ENCODE measurements at regions of chr6 and their contacts with region 1.

Region 1: DNA sequence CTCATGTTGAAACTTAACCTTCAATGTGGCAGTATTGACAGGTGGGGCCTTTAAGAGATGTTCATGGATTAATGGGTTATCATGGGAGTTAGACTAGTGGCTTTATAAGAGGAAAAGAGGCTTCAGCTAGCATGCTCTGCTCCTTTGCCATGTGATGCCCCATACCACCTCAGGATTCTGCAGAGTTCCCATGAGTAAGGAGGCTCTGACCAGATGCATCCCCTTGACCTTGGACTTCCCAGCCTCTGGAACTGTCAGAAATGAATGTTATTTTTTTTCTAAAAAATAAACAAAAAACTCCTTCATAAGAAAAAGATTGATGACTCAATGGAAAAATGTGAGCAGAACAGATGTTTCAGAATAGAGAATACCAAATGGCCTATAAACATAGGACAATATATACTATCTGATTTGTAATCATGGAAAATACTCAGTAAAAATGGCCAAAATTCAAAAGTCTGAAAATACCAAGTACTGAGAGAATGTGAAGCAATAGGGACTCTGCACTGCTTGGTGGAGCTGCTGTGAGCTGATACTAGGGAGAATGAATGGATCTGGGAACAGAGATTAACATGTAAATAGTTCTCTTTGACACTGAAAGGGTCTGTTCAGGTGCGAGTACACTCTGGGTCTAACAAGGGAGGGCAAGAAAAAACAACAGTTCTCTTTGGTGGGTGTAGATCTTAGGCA is 7.4 kb upstream of the TRIM39 start:
- DNase-seq: no peak
- H3K4me3 ChIP-seq: no peak overlapping the region
- H3K27ac ChIP-seq: no peak overlapping the region
- H3K4me1 ChIP-seq: peaks cover 1% of the 10 kb centered on the region
- H3K27me3 ChIP-seq: no peaks in the 10 kb centered on the region
- CTCF ChIP-seq: no peak

Region 2: DNA sequence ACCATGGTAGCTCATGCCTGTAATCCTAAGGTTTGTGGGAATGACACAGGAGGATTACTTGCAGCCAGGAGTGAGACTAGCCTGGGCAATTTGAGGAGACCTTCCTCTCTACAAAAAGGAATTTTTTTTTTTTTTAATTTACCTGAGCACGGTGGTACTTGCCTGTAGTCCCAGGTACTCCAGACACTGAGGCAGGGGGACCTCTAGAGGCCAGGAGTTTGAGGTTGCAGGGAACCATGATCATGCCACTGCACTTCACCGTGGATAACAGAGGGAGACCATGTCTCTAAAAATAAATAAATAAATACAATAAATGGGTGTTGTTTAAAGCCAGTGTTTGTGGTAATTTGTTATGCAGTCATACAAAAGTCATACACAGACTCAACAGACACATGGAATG is 598.4 kb before region 1 on chr6:
- CTCF ChIA-PET with region 1: no interaction called
- dilution Hi-C with region 1: no loop called
- in situ Hi-C with region 1: no loop called
- intact Hi-C with region 1: no loop called
- DNase-seq: no peak
- H3K4me3 ChIP-seq: no peak overlapping the region
- H3K27ac ChIP-seq: no peak overlapping the region
- H3K4me1 ChIP-seq: no peaks in the 10 kb centered on the region
- H3K27me3 ChIP-seq: no peaks in the 10 kb centered on the region
- CTCF ChIP-seq: peak in 1 of 2 donors; percentile 26

Region 3: DNA sequence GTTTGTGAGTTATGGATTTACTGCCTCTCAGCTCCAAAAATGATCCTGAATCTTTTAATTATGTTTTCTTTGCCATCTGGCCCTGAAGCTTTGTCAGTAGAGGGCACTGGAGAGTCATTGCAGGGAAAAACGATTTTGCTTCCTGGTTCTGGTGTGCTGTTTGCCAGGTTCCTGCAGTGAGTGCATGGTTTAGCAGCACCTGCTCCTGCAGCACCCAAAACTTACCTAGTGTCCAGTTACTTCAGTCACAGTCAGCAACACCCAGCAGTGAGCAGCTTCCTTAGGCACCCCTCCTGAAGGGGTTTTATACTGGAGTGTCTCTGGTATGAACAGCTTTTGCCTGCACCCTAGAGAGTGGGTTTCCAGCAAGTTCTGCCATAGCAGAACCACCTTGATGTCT is 100.0 kb before region 1 on chr6:
- CTCF ChIA-PET with region 1: no interaction called
- dilution Hi-C with region 1: loop called (anchors 5 kb)
- in situ Hi-C with region 1: no loop called
- intact Hi-C with region 1: no loop called
- DNase-seq: peak; percentile 50
- H3K4me3 ChIP-seq: no peak overlapping the region
- H3K27ac ChIP-seq: no peak overlapping the region
- H3K4me1 ChIP-seq: peaks cover under 1% of the 10 kb centered on the region
- H3K27me3 ChIP-seq: no peaks in the 10 kb centered on the region
- CTCF ChIP-seq: peak; percentile 92 to 96

Region 4: DNA sequence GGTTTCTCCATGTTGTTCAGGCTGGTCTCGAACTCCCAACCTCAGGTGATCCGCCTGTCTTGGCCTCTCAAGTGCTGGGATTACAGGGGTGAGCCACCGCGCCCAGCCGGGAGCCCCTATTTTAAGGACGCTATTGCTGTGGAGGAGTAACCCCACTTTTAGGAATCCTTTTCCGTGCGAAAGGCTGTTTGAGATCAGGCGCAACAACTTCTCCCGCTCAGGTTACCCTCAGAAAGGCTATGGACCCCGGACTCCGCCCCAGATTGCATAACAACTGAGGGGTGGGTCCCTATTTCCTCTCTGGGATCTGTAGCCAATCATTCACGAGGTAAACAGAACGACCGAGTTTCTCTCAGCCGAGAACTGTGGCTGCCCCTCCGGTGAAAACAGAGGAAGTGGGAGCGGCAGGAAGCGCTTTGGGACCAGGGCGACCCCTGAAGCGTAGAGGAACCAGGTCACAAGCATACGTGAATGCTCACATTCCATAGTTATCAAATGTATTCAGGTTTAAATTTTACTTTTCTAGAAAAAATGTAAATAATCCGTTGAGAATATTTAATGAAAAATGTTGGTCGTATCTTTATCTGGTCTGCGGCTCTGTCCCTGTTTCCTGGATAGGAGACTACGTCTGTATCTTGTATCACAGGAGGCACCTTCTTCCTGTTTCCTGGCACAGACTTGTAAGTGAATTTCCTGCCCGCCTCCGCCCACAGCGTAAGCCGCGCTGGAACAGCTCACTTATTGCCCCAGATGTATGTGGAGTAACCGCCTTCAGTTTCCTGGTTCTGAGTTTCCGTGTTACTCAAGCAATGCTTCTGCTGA is 196.9 kb after region 1 on chr6:
- CTCF ChIA-PET with region 1: no interaction called
- dilution Hi-C with region 1: no loop called
- in situ Hi-C with region 1: no loop called
- intact Hi-C with region 1: no loop called
- DNase-seq: peak; percentile 91
- H3K4me3 ChIP-seq: peak overlapping the region; percentile 48 to 70 (median 48)
- H3K27ac ChIP-seq: peak overlapping the region; percentile 99
- H3K4me1 ChIP-seq: peaks cover 19% of the 10 kb centered on the region
- H3K27me3 ChIP-seq: no peaks in the 10 kb centered on the region
- CTCF ChIP-seq: no peak

Measured in mammary epithelial cell (primary cell).